Heart right ventricle (tissue), 16 donors: ENCODE measurements at regions of chr14 and their contacts with region 1.

Region 1: GRCh38 chr14:34496679-34497513 is 34.9 kb upstream of the SPTSSA start:
- DNase-seq: peak; percentile 69 to 82
- ATAC-seq: peak; percentile 88 to 96 (median 92)
- H3K4me3 ChIP-seq: peak overlapping the region in 2 of 10 donors; percentile 17 to 22
- H3K27ac ChIP-seq: peak overlapping the region; percentile 18 to 83 (median 68)
- H3K4me1 ChIP-seq: peaks cover 0 to 17% (median 0%) of the 10 kb centered on the region in 9 donors
- H3K27me3 ChIP-seq: no peaks in the 10 kb centered on the region
- CTCF ChIP-seq: peak in 4 of 9 donors; percentile 12 to 36 (median 27)

Region 2: GRCh38 chr14:34365309-34365915 is 131.5 kb before region 1 on chr14:
- intact Hi-C with region 1: loop called in 1 of 10 experiments (anchors 10 kb)
- DNase-seq: no peak
- ATAC-seq: no peak
- H3K4me3 ChIP-seq: no peak overlapping the region
- H3K27ac ChIP-seq: no peak overlapping the region
- H3K4me1 ChIP-seq: peaks cover 0 to 40% (median 3%) of the 10 kb centered on the region in 9 donors
- H3K27me3 ChIP-seq: peaks cover 0 to 6% (median 0%) of the 10 kb centered on the region in 7 donors
- CTCF ChIP-seq: peak in 7 of 9 donors; percentile 12 to 45 (median 15)